Mammary epithelial cell (primary cell): ENCODE measurements at regions of chr14 and their contacts with region 1.

Region 1: GRCh38 chr14:34875031-34875922 is at the start of gene BAZ1A:
- DNase-seq: peak; percentile 93
- H3K4me3 ChIP-seq: peak within 1 kb of the TSS; percentile 74 to 98 (median 74)
- H3K27ac ChIP-seq: peak within 1 kb of the TSS; percentile 98
- H3K4me1 ChIP-seq: peaks cover 14% of the 10 kb centered on the region
- H3K27me3 ChIP-seq: no peaks in the 10 kb centered on the region
- CTCF ChIP-seq: no peak
- total RNA-seq, gene BAZ1A: 25.0 to 42.3 TPM

Region 2: DNA sequence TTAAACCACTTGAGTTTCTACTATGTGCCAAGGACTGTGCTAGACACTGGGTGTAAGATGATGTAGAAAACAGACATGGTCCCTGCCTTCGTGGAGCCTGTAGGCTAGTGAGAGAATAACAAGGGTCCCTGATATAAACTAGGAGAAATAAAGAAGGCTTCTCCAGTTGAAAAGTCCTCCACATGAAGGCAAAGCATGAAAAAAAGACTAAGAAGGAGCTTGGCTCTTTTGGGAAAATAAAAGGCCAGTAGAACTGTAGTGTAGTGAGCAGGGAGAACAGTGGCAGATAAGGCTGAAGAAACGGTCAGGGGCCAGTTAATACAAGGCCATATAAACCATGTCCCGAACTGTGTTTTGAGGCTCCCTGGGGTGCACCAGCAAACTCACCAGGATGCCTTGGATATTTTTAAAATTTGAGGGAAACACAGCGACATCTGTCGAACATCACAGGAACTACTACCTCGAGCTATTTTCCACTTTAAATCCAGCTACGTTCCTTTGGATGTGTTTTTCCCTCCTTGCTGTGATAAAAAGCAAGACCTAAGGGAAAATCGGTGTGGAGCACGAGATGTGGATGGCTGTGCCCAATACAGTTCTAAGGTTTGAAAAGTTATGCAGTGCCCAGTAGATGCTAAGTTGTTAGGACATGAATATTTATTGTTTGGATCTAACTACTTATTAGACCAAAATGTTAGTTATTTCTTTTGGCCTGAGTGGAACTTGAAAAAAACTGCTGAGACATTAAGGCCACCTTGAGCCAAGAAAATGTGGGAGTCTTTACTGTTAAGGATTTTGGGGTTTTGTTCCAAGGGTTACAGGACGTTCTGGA is 152.3 kb before region 1 on chr14:
- CTCF ChIA-PET with region 1: no interaction called
- dilution Hi-C with region 1: no loop called
- in situ Hi-C with region 1: no loop called
- intact Hi-C with region 1: loop called (anchors 10 kb)
- DNase-seq: peak; percentile 38
- H3K4me3 ChIP-seq: no peak overlapping the region
- H3K27ac ChIP-seq: no peak overlapping the region
- H3K4me1 ChIP-seq: peaks cover 2% of the 10 kb centered on the region
- H3K27me3 ChIP-seq: no peaks in the 10 kb centered on the region
- CTCF ChIP-seq: peak; percentile 79 to 82

Region 3: GRCh38 chr14:34826661-34827060 is 48.6 kb before region 1 on chr14:
- CTCF ChIA-PET with region 1: no interaction called
- dilution Hi-C with region 1: no loop called
- in situ Hi-C with region 1: no loop called
- intact Hi-C with region 1: loop called (anchors 5 kb)
- DNase-seq: peak; percentile 32
- H3K4me3 ChIP-seq: no peak overlapping the region
- H3K27ac ChIP-seq: no peak overlapping the region
- H3K4me1 ChIP-seq: no peaks in the 10 kb centered on the region
- H3K27me3 ChIP-seq: no peaks in the 10 kb centered on the region
- CTCF ChIP-seq: no peak

Region 4: GRCh38 chr14:34895277-34895676 is 20.0 kb after region 1 on chr14:
- CTCF ChIA-PET with region 1: no interaction called
- dilution Hi-C with region 1: no loop called
- in situ Hi-C with region 1: no loop called
- intact Hi-C with region 1: no loop called
- DNase-seq: no peak
- H3K4me3 ChIP-seq: no peak overlapping the region
- H3K27ac ChIP-seq: no peak overlapping the region
- H3K4me1 ChIP-seq: no peaks in the 10 kb centered on the region
- H3K27me3 ChIP-seq: no peaks in the 10 kb centered on the region
- CTCF ChIP-seq: no peak

Region 5: DNA sequence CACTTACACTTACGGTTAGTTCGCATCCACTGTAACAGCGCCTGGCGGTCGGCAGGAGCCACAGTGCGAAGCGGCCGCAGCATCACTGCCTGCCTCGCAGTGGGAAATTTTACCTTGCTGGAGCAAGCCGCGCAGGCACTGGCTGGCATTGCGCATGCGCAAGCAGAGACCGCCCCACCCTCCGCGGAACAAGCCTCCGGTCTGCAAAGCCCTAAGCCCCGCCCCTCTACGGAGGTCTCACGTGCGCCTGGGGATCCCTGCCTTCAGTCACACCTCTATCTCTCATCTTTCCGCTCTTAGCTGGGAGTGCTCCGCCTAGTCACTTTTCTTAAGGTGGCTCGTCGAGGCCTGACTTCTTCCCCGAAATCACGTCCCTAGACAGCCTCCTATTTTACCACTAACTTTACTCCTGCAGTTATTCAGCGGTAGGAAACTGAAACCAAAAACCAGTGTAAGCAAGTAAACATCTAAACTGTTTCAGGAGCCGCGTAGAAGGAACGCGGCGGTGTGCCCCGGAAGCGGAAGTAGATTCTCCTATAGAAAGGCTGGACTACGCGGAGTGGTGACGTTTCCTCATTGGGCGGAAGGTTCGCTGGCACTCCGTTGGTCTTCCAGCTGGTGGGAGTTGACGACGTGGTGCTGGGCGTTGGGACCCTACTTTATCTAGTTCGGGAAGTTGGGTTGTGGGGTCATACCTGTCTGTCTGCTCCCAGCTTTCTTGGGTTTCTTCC is 107.3 kb after region 1 on chr14 and contains the start of gene SRP54:
- CTCF ChIA-PET with region 1: interaction called, 4 read pairs
- dilution Hi-C with region 1: no loop called
- in situ Hi-C with region 1: loop called in 1 of 2 experiments (anchors 10 kb)
- intact Hi-C with region 1: loop called (anchors 1 kb)
- DNase-seq: peak; percentile 97
- H3K4me3 ChIP-seq: peak within 1 kb of the TSS; percentile 70 to 91 (median 90)
- H3K27ac ChIP-seq: peak within 1 kb of the TSS; percentile 91
- H3K4me1 ChIP-seq: peaks cover 14% of the 10 kb centered on the region
- H3K27me3 ChIP-seq: no peaks in the 10 kb centered on the region
- CTCF ChIP-seq: peak in 1 of 2 donors; percentile 44
- total RNA-seq, gene SRP54: 51.3 to 61.4 TPM

Region 6: GRCh38 chr14:35121887-35122695 is 246.8 kb after region 1 on chr14 and contains the starts of genes PPP2R3C and PRORP:
- CTCF ChIA-PET with region 1: no interaction called
- dilution Hi-C with region 1: no loop called
- in situ Hi-C with region 1: no loop called
- intact Hi-C with region 1: loop called (anchors 10 kb)
- DNase-seq: peak; percentile 99
- H3K4me3 ChIP-seq: peak within 1 kb of the TSS; percentile 54 to 67 (median 61)
- H3K27ac ChIP-seq: peak within 1 kb of the TSS; percentile 99
- H3K4me1 ChIP-seq: peaks cover 11% of the 10 kb centered on the region
- H3K27me3 ChIP-seq: no peaks in the 10 kb centered on the region
- CTCF ChIP-seq: no peak
- total RNA-seq, gene PPP2R3C: 12.2 to 18.7 TPM
- total RNA-seq, gene PRORP: 33.5 to 53.2 TPM